ENCODE measurements at regions of chr7 and their contacts with region 1.

Region 1: GRCh38 chr7:5193880-5194279 is 3.8 kb downstream of the WIPI2 start:
- DNase-seq: no peak
- H3K4me3 ChIP-seq: no peak overlapping the region
- H3K27ac ChIP-seq: no peak overlapping the region
- H3K4me1 ChIP-seq: peaks cover 13% of the 10 kb centered on the region
- H3K27me3 ChIP-seq: no peaks in the 10 kb centered on the region
- CTCF ChIP-seq: no peak

Region 2: GRCh38 chr7:4951903-4952636 is 241.8 kb before region 1 on chr7:
- CTCF ChIA-PET with region 1: no interaction called
- POLR2A ChIA-PET with region 1: interaction called, 15 read pairs
- intact Hi-C with region 1: no loop called
- DNase-seq: peak in 1 of 2 experiments; percentile 20
- H3K4me3 ChIP-seq: no peak overlapping the region
- H3K27ac ChIP-seq: no peak overlapping the region
- H3K4me1 ChIP-seq: no peaks in the 10 kb centered on the region
- H3K27me3 ChIP-seq: peaks cover 89% of the 10 kb centered on the region
- CTCF ChIP-seq: no peak

Region 3: GRCh38 chr7:5012985-5013384 is 180.9 kb before region 1 on chr7:
- CTCF ChIA-PET with region 1: no interaction called
- POLR2A ChIA-PET with region 1: no interaction called
- intact Hi-C with region 1: no loop called
- DNase-seq: no peak
- H3K4me3 ChIP-seq: no peak overlapping the region
- H3K27ac ChIP-seq: no peak overlapping the region
- H3K4me1 ChIP-seq: no peaks in the 10 kb centered on the region
- H3K27me3 ChIP-seq: no peaks in the 10 kb centered on the region
- CTCF ChIP-seq: no peak

Region 4: GRCh38 chr7:5218564-5219360 is 24.9 kb after region 1 on chr7:
- CTCF ChIA-PET with region 1: no interaction called
- POLR2A ChIA-PET with region 1: no interaction called
- intact Hi-C with region 1: loop called (anchors 1 kb)
- DNase-seq: no peak
- H3K4me3 ChIP-seq: no peak overlapping the region
- H3K27ac ChIP-seq: no peak overlapping the region
- H3K4me1 ChIP-seq: no peaks in the 10 kb centered on the region
- H3K27me3 ChIP-seq: no peaks in the 10 kb centered on the region
- CTCF ChIP-seq: no peak

Region 5: DNA sequence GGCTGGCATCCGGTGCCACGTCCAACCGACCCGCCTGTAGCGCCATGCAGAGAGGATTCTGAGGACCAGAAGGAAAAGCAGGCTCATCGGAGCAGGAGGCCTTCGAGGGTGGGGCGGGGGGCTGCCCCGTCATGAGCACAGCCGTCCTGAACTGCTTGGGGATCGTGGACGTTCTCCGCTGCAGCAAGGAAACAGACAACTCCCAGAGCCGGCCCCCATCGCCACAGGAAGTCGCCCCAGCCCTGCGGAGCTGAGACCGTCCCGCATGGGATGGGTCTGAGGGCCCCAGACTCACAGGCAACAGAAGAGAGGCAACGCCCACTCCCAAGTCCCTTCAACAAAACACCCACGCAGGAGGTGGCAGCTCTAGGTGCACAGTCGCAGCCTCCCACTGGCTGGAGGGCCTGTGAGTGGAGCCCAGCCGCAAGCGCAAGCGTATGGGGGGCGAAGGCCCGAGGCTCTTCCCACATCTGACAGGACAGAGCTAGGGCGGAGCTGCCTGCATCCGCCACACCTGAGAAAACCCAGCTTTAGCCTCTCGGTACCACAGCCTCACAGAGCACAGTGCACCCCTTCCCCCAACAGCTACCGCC is 294.5 kb after region 1 on chr7:
- CTCF ChIA-PET with region 1: interaction called, 11 read pairs
- POLR2A ChIA-PET with region 1: no interaction called
- intact Hi-C with region 1: no loop called
- DNase-seq: no peak
- H3K4me3 ChIP-seq: no peak overlapping the region
- H3K27ac ChIP-seq: no peak overlapping the region
- H3K4me1 ChIP-seq: 0 out of 2 replicates have a peak, but pooled peaks cover 5% of the 10 kb centered on the region
- H3K27me3 ChIP-seq: no peaks in the 10 kb centered on the region
- CTCF ChIP-seq: no peak

Measured in PC-9 (cell line).